ENCODE measurements at regions of chr7 and their contacts with region 1.

Region 1: DNA sequence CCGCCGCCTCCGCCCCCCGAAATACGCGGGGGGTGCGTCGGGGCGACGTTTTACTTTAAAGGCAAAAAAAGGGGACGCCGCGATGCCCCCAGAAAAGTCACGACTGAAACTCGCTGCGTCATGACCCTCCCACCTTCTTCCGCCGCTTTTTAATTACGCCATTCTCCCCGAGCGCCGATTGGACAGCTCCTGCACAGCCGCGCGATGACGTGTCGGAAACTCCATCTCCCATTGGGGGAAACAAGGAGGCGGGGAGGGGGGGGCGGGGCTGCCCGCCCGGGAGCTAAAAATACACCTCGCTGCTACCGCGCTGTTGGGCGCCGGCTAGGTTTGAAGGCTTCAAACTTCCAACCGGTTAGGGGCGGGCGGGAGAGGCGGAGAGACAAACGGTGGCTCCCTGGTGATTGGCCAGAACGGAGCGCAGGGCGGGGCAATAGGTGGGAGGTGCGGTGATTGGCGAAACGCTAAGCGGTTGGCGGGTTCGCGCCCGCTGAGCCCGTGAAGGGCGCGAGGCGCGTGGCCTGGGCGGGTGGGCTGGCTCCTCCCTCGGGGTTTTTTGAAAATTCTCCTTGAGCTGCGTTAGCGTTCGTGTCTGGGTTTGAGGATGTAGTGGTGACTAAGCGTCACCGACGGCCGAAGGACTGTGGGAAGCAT is at the start of gene RHEB:
- DNase-seq: peak; percentile 98 to 99 (median 99)
- ATAC-seq: peak; percentile 93 to 98 (median 96)
- H3K4me3 ChIP-seq: peak within 1 kb of the TSS; percentile 55 to 98 (median 79)
- H3K27ac ChIP-seq: peak within 1 kb of the TSS; percentile 91 to 100 (median 98)
- H3K4me1 ChIP-seq: peaks cover 0 to 45% (median 28%) of the 10 kb centered on the region in 12 donors
- H3K27me3 ChIP-seq: no peaks in the 10 kb centered on the region
- CTCF ChIP-seq: no peak
- POLR2A ChIP-seq: no peak
- total RNA-seq, gene RHEB: 81.4 to 155 (median 106) TPM

Region 2: DNA sequence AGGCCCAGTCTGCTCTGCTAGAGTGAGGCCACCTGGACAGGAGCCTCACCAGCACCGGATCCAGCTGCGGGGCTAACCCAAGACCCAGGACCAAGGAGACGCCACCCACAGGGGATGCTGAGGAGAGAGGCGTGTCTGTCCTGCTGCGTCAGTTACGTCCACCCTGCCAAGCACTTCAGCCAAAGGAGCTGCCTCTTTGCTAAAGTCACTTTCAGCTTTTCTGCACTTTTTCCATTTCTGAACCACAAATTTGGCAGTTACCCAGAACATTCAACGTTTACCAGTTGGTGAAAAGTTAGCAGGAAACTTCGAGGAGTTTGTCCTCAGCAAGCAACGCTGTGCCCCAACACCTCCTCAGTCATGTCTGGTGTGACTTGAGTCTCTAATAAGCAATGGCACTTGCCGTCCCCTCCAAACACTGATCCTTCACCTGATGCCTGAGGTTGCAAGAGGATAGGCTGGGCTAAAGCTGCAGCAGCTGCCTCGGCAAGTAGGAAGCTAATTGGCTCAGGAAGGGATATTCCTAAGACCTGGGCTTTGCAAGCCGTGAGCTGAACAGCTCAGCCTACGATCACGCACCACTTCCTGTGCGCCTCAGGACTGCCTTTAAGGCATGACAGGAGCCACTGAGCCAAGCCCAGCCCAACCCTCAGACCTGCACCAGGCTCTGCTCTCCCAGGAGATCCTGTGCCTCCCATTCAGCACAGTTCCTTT is 581.9 kb before region 1 on chr7:
- intact Hi-C with region 1: no loop called
- DNase-seq: no peak
- ATAC-seq: no peak
- H3K4me3 ChIP-seq: no peak overlapping the region
- H3K27ac ChIP-seq: no peak overlapping the region
- H3K4me1 ChIP-seq: peaks cover 0 to 16% (median 4%) of the 10 kb centered on the region in 12 donors
- H3K27me3 ChIP-seq: peaks cover 0 to 11% (median 0%) of the 10 kb centered on the region in 9 donors
- CTCF ChIP-seq: no peak
- POLR2A ChIP-seq: no peak

Region 3: DNA sequence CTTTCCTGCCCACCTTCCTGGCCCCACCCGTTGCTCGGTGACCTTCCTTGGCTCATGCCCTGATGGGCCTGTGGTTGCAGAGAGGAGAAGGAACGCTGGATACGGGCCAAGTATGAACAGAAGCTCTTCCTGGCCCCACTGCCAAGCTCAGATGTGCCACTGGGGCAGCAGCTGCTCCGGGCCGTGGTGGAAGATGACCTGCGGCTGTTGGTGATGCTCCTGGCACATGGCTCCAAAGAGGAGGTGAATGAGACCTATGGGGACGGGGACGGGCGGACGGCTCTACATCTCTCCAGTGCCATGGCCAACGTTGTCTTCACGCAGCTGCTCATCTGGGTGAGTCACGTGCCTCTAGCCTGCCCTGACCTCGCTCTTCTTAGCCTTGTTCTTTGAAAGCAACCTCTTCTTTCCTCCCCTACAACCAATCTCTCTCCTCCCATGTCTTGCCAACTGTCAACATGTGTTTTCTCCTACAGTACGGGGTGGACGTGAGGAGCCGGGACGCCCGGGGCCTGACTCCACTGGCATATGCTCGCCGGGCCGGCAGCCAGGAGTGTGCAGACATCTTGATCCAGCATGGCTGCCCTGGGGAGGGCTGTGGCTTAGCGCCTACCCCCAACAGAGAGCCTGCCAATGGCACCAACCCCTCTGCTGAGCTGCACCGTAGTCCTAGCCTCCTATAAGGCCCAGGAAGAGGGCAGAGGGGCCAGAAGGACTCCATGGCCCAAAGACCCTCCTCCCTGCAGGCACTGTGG is 376.5 kb before region 1 on chr7:
- intact Hi-C with region 1: no loop called
- DNase-seq: peak in 1 of 5 donors; percentile 55
- ATAC-seq: peak; percentile 6 to 54 (median 32)
- H3K4me3 ChIP-seq: no peak overlapping the region
- H3K27ac ChIP-seq: peak overlapping the region in 3 of 12 donors; percentile 9 to 39 (median 13)
- H3K4me1 ChIP-seq: peaks cover 0 to 20% (median 6%) of the 10 kb centered on the region in 12 donors
- H3K27me3 ChIP-seq: no peaks in the 10 kb centered on the region
- CTCF ChIP-seq: no peak
- POLR2A ChIP-seq: no peak

Region 4: DNA sequence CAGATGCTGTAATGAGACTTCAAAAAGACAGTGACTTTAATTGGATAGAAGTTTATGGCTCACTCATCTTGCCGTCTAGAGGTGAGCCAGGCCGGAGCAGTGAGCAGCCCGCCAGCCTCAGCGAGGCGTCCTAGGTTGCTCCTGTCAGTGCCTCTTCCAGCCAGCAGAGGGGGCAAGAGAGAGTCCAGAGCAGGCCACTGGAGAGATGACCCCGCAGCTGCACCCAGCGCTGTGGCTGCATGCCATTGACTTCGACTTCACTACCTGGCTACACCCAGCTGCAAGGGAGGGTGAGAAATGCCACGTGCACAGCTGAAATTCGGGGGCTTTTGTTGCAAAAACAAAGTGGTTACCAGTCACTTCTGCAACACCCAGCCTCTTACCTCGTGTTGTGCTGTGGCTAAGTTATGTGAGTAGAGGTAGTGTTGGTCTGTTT is 151.7 kb before region 1 on chr7:
- intact Hi-C with region 1: loop called in 1 of 10 experiments (anchors 5 kb)
- DNase-seq: peak; percentile 79 to 88 (median 85)
- ATAC-seq: peak; percentile 84 to 97 (median 96)
- H3K4me3 ChIP-seq: no peak overlapping the region
- H3K27ac ChIP-seq: peak overlapping the region in 1 of 12 donors; percentile 63
- H3K4me1 ChIP-seq: peaks cover 0 to 17% (median 6%) of the 10 kb centered on the region in 12 donors
- H3K27me3 ChIP-seq: no peaks in the 10 kb centered on the region
- CTCF ChIP-seq: peak; percentile 91 to 98 (median 95)
- POLR2A ChIP-seq: no peak

Region 5: GRCh38 chr7:151459726-151460473 is 60.0 kb before region 1 on chr7:
- intact Hi-C with region 1: loop called in 6 of 10 experiments (anchors 2 to 5 kb)
- DNase-seq: peak; percentile 73 to 91 (median 78)
- ATAC-seq: peak; percentile 88 to 90 (median 90)
- H3K4me3 ChIP-seq: peak overlapping the region in 9 of 12 donors; percentile 20 to 40 (median 27)
- H3K27ac ChIP-seq: peak overlapping the region; percentile 65 to 97 (median 92)
- H3K4me1 ChIP-seq: peaks cover 3 to 34% (median 22%) of the 10 kb centered on the region in 12 donors
- H3K27me3 ChIP-seq: no peaks in the 10 kb centered on the region
- CTCF ChIP-seq: peak in 8 of 12 donors; percentile 5 to 50 (median 28)
- POLR2A ChIP-seq: peak in 1 of 2 donors; percentile 13

Region 6: GRCh38 chr7:151484971-151485707 is 34.8 kb before region 1 on chr7:
- intact Hi-C with region 1: loop called in 1 of 10 experiments (anchors 5 kb)
- DNase-seq: peak in 1 of 5 donors; percentile 45
- ATAC-seq: peak; percentile 37 to 75 (median 68)
- H3K4me3 ChIP-seq: no peak overlapping the region
- H3K27ac ChIP-seq: peak overlapping the region in 8 of 12 donors; percentile 7 to 67 (median 27)
- H3K4me1 ChIP-seq: peaks cover 0 to 93% (median 40%) of the 10 kb centered on the region in 12 donors
- H3K27me3 ChIP-seq: no peaks in the 10 kb centered on the region
- CTCF ChIP-seq: no peak
- POLR2A ChIP-seq: no peak

Region 7: DNA sequence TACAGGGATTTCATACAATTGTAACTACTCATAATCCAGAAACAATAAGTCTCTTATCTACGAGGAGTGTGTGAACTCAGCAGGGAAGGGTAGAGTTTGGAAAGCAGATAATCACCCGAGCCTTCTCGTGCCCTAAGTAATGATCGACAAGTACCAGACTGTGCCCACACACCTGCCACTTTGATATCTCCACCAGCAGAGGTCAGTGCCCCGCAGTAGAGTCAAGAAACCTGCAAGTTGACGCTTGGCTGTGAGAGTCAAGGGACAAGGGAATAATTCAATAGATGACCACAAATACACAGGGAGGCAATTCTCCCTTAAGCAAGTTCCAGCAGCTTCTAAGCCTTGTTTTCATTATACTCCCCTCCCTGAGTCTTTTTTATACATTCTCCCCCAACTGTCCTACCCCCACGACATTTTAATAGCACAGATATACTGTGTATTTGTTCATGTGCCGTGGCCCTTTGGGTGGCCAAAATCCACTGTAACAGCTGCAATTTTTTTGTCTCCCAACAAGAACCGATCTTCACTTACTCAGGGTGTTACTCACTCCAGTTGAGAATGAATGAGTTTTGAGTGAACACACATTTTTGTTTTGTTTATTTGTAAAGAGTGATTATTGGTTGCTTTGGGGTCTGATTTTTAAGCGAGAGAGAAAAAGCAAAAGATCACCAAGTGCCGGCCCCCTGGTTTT is 106.7 kb after region 1 on chr7:
- intact Hi-C with region 1: loop called in 3 of 10 experiments (anchors 5 to 10 kb)
- DNase-seq: peak in 4 of 5 donors; percentile 28 to 64 (median 46)
- ATAC-seq: peak; percentile 26 to 66 (median 58)
- H3K4me3 ChIP-seq: no peak overlapping the region
- H3K27ac ChIP-seq: peak overlapping the region in 4 of 12 donors; percentile 17 to 50 (median 26)
- H3K4me1 ChIP-seq: peaks cover 0 to 64% (median 30%) of the 10 kb centered on the region in 12 donors
- H3K27me3 ChIP-seq: no peaks in the 10 kb centered on the region
- CTCF ChIP-seq: peak in 11 of 12 donors; percentile 21 to 61 (median 45)
- POLR2A ChIP-seq: no peak